Panc1 (cell line): ENCODE measurements at regions of chr15 and their contacts with region 1.

Region 1: DNA sequence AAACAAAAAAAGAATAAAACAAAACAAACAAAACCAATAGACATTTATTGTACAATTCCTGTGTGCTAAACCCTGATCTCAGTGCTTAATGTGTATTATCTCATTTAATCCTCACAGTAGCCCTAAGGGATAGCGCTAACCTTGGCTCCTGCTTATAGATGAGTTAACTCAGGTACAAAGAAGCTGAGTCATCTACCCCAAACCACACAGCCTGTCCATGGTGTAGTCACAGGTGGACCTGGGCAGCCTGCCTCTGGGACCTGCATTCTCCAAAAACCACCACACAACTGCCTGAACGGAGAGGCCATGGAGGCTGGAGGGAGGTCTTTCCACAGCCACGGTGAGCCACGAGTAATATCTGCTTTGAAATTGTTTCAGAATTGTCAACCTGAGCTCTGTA is 5.5 kb upstream of the CLN6 start:
- DNase-seq: no peak
- ATAC-seq: no peak
- H3K4me3 ChIP-seq: no peak overlapping the region
- H3K27ac ChIP-seq: no peak overlapping the region
- H3K4me1 ChIP-seq: peaks cover 6% of the 10 kb centered on the region
- H3K27me3 ChIP-seq: no peaks in the 10 kb centered on the region
- CTCF ChIP-seq: no peak

Region 2: GRCh38 chr15:67945951-67946700 is 288.9 kb before region 1 on chr15:
- CTCF ChIA-PET with region 1: no interaction called
- POLR2A ChIA-PET with region 1: no interaction called
- in situ Hi-C with region 1: no loop called
- intact Hi-C with region 1: no loop called
- DNase-seq: no peak
- ATAC-seq: peak; percentile 87
- H3K4me3 ChIP-seq: no peak overlapping the region
- H3K27ac ChIP-seq: peak overlapping the region; percentile 82
- H3K4me1 ChIP-seq: peaks cover 42% of the 10 kb centered on the region
- H3K27me3 ChIP-seq: no peaks in the 10 kb centered on the region
- CTCF ChIP-seq: no peak

Region 3: GRCh38 chr15:68149059-68149458 is 86.0 kb before region 1 on chr15:
- CTCF ChIA-PET with region 1: no interaction called
- POLR2A ChIA-PET with region 1: no interaction called
- in situ Hi-C with region 1: no loop called
- intact Hi-C with region 1: no loop called
- DNase-seq: no peak
- ATAC-seq: no peak
- H3K4me3 ChIP-seq: no peak overlapping the region
- H3K27ac ChIP-seq: no peak overlapping the region
- H3K4me1 ChIP-seq: no peaks in the 10 kb centered on the region; the same call in 1 of the 2 replicates
- H3K27me3 ChIP-seq: no peaks in the 10 kb centered on the region
- CTCF ChIP-seq: no peak

Region 4: DNA sequence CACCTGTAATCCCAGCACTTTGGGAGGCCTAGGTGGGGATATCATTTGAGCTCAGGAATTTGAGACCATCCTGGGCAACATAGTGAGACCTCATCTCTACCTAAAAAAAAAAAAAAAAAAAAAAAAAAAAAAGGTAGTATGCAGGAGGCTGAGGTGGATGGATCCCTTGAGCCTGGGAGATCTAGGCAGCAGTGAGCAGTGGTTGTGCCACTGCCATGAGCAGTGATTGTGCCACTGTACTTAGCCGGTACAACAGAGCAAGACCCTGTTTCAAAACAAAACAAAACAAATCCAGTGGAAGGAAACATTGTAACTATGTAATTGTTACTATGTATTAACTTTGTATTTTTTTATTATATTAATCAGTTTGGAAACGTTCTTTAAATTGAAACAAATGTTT is 48.4 kb after region 1 on chr15:
- CTCF ChIA-PET with region 1: no interaction called
- POLR2A ChIA-PET with region 1: interaction called, 11 read pairs
- in situ Hi-C with region 1: no loop called
- intact Hi-C with region 1: no loop called
- DNase-seq: no peak
- ATAC-seq: no peak
- H3K4me3 ChIP-seq: no peak overlapping the region
- H3K27ac ChIP-seq: no peak overlapping the region
- H3K4me1 ChIP-seq: peaks cover 23% of the 10 kb centered on the region
- H3K27me3 ChIP-seq: no peaks in the 10 kb centered on the region
- CTCF ChIP-seq: no peak

Region 5: DNA sequence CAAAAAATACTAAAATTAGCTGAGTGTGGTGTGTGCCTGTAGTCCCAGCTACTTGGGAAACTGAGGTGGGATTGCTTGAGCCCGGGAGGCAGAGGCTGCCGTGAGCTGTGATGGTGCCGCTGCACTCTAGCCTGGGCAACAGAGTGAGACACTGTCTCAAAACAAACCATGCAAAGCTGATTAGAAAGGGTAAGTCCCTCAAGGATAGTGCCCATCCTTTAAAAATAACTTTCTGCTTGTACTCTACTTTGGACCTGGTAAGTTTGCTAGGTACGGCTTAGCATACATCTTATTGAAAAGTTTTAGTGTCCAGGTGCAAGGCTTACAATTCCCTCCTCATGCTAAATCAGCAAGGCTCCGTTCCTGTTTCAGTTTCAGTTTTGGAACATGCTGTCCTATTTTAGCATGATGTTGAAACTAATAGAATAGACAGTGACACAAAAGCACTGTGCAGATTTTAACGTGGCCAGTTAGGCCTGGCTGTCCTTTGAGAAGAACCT is 63.9 kb after region 1 on chr15:
- CTCF ChIA-PET with region 1: no interaction called
- POLR2A ChIA-PET with region 1: no interaction called
- in situ Hi-C with region 1: no loop called
- intact Hi-C with region 1: no loop called
- DNase-seq: no peak
- ATAC-seq: no peak
- H3K4me3 ChIP-seq: no peak overlapping the region
- H3K27ac ChIP-seq: no peak overlapping the region
- H3K4me1 ChIP-seq: no peaks in the 10 kb centered on the region
- H3K27me3 ChIP-seq: no peaks in the 10 kb centered on the region
- CTCF ChIP-seq: no peak

Region 6: DNA sequence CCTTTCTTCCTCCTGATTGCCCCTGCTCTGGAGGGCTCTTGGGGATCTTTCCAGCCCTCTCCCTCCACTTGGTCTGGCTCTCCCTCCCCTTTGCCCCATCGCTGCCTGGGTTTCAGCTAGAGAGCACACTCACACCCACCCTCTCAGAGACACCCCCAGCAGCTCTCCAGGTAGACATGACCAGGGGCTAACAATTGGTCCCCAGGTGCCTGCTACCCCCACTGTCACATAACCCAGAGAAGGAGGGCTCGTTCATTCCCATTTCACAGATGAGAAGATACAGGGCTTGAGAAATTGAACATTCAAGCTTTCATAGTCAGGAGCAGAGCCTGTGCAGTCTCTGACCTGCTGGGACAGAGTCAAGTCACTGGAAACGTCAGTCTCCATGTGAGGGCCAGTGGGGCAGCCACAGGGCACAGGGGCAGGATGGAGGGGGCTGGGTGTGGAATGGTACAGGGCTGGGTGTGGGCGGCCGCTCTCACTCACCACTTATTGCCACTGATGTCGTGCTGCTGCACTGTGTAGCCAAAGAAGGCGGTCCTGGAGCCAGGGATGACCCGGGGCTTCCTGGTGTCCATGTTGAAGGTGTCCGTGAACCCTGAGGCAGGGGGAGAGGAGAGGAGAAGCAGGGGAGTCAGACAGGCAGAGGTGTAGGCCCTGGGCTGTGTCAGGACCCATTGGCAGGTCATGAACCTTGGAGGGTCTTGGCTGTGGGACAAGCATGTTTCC is 167.6 kb after region 1 on chr15:
- CTCF ChIA-PET with region 1: no interaction called
- POLR2A ChIA-PET with region 1: no interaction called
- in situ Hi-C with region 1: no loop called
- intact Hi-C with region 1: no loop called
- DNase-seq: no peak
- ATAC-seq: peak; percentile 27; the same call in 1 of the 2 replicates
- H3K4me3 ChIP-seq: no peak overlapping the region
- H3K27ac ChIP-seq: no peak overlapping the region
- H3K4me1 ChIP-seq: no peaks in the 10 kb centered on the region
- H3K27me3 ChIP-seq: no peaks in the 10 kb centered on the region
- CTCF ChIP-seq: no peak